CD8-positive, alpha-beta T cell (primary cell): ENCODE measurements at regions of chr7 and their contacts with region 1.

Region 1: GRCh38 chr7:83976295-83976694 is 218.3 kb downstream of the SEMA3A start:
- DNase-seq: peak in 3 of 9 experiments; percentile 7 to 49 (median 32)
- ATAC-seq: peak; percentile 70
- H3K4me3 ChIP-seq: no peak overlapping the region
- H3K4me3 Mint-ChIP-seq: no peak overlapping the region
- H3K27ac ChIP-seq: no peak overlapping the region
- H3K27ac Mint-ChIP-seq: no peak overlapping the region
- H3K4me1 ChIP-seq: no peaks in the 10 kb centered on the region
- H3K4me1 Mint-ChIP-seq: no peaks in the 10 kb centered on the region
- H3K27me3 ChIP-seq: no peaks in the 10 kb centered on the region
- H3K27me3 Mint-ChIP-seq: no peaks in the 10 kb centered on the region
- CTCF ChIP-seq: peak; percentile 73

Region 2: GRCh38 chr7:83996879-83997278 is 20.6 kb after region 1 on chr7:
- CTCF ChIA-PET with region 1: no interaction called
- POLR2A ChIA-PET with region 1: no interaction called
- intact Hi-C with region 1: no loop called
- DNase-seq: no peak
- ATAC-seq: no peak
- H3K4me3 ChIP-seq: no peak overlapping the region
- H3K4me3 Mint-ChIP-seq: no peak overlapping the region
- H3K27ac ChIP-seq: no peak overlapping the region
- H3K27ac Mint-ChIP-seq: no peak overlapping the region
- H3K4me1 ChIP-seq: no peaks in the 10 kb centered on the region
- H3K4me1 Mint-ChIP-seq: peaks cover 3% of the 10 kb centered on the region
- H3K27me3 ChIP-seq: no peaks in the 10 kb centered on the region
- H3K27me3 Mint-ChIP-seq: no peaks in the 10 kb centered on the region
- CTCF ChIP-seq: no peak

Region 3: DNA sequence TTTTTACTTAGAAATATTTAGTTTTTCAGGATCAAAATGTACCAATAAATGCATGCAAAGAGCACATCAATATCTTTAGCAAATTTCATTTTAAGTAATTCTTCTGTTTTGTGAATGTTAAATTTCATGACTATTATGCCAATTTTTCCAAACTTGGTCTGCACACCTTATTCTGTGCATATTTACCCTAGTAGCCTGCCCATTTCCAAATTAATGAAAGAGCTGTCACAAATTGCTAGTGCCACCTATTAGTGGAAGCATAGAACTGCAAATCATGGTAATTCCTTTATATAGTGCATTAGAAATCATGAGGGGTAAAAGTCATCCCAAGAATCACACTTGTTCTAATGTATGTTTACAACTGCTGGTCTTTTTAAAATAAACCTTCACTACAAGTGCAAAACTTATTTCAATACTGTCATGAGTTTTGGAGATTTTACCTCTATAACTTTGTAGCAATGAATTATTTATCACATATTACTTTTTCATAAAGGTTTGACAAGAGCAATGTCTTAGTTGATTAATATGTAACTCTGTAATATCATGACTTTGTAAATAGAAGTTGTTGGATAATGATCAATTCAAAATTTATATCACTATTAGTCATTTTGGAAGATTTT is 212.6 kb after region 1 on chr7:
- CTCF ChIA-PET with region 1: no interaction called
- POLR2A ChIA-PET with region 1: no interaction called
- intact Hi-C with region 1: loop called (anchors 1 to 5 kb)
- DNase-seq: no peak
- ATAC-seq: no peak
- H3K4me3 ChIP-seq: no peak overlapping the region
- H3K4me3 Mint-ChIP-seq: no peak overlapping the region
- H3K27ac ChIP-seq: no peak overlapping the region
- H3K27ac Mint-ChIP-seq: no peak overlapping the region
- H3K4me1 ChIP-seq: no peaks in the 10 kb centered on the region
- H3K4me1 Mint-ChIP-seq: peaks cover 22% of the 10 kb centered on the region
- H3K27me3 ChIP-seq: no peaks in the 10 kb centered on the region
- H3K27me3 Mint-ChIP-seq: no peaks in the 10 kb centered on the region
- CTCF ChIP-seq: no peak

Region 4: DNA sequence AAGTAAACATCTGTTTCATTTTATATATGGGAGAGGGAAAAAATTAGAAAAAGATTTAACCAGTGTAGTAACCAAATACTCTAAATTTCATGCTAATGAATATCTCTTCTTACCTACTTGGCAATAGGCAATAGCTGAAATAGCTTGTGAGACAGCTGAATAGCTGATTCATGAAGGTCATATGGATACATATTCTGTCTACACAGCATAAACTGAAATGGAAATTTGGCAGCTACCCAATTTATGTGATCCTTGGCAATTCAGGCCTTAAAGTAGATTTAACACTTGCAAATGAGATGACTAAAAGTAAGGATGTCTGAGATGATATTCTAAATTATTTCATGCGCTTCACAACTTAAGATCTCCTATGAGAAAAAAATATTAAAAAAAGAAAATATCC is 479.5 kb after region 1 on chr7:
- CTCF ChIA-PET with region 1: no interaction called
- POLR2A ChIA-PET with region 1: no interaction called
- intact Hi-C with region 1: loop called (anchors 2 to 5 kb)
- DNase-seq: no peak
- ATAC-seq: no peak
- H3K4me3 ChIP-seq: no peak overlapping the region
- H3K4me3 Mint-ChIP-seq: no peak overlapping the region
- H3K27ac ChIP-seq: no peak overlapping the region
- H3K27ac Mint-ChIP-seq: no peak overlapping the region
- H3K4me1 ChIP-seq: no peaks in the 10 kb centered on the region
- H3K4me1 Mint-ChIP-seq: no peaks in the 10 kb centered on the region
- H3K27me3 ChIP-seq: no peaks in the 10 kb centered on the region
- H3K27me3 Mint-ChIP-seq: no peaks in the 10 kb centered on the region
- CTCF ChIP-seq: no peak

Region 5: GRCh38 chr7:85023045-85023712 is 1046.9 kb after region 1 on chr7:
- CTCF ChIA-PET with region 1: interaction called, 3 read pairs
- POLR2A ChIA-PET with region 1: no interaction called
- intact Hi-C with region 1: loop called (anchors 1 kb)
- DNase-seq: peak in 3 of 9 experiments; percentile 31 to 48 (median 32)
- ATAC-seq: no peak
- H3K4me3 ChIP-seq: no peak overlapping the region
- H3K4me3 Mint-ChIP-seq: no peak overlapping the region
- H3K27ac ChIP-seq: no peak overlapping the region
- H3K27ac Mint-ChIP-seq: no peak overlapping the region
- H3K4me1 ChIP-seq: no peaks in the 10 kb centered on the region
- H3K4me1 Mint-ChIP-seq: no peaks in the 10 kb centered on the region
- H3K27me3 ChIP-seq: no peaks in the 10 kb centered on the region
- H3K27me3 Mint-ChIP-seq: peaks cover 3% of the 10 kb centered on the region
- CTCF ChIP-seq: peak; percentile 69

Region 6: DNA sequence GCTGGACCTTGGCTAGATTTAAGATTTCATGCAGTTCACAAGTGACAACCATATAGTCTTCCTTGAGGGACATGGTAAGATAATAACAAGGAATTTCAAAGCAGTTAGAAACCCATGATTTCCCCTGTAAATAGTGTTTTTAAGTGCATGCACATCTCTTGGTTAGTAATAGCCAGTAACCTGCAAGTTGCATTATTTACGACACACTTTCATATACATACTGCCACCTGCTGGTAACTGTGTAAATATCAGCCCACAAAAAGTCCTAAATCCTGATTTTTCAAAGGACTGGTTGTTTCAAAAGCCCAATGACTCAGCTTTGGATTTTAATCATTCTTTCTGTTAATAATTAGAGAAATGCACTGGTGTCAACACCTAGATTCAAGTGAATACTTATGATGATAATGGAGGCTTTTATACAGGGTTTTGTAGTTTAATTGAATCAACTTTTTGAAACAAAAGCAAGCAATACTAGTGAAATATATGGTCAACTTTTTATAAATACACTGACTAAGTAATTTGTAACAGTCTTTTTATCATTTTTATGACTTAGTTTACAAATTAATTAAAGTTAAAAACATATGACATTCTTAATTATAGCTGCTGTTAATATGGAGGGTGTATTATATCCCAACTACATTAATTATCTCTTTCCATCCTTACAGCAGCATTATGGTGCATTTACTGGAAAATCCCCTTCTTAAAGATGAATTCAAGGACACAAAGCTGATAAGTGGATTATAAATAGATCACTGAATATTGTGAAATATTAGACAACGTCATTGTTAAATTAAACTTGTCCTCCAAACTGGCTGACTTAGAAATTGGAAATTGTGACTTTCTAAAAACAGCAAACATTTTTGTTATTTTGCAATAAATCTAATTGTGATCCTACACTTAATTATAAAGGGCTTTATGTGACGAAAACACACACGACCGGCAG is 1578.2 kb after region 1 on chr7:
- CTCF ChIA-PET with region 1: no interaction called
- POLR2A ChIA-PET with region 1: no interaction called
- intact Hi-C with region 1: loop called (anchors 5 to 10 kb)
- DNase-seq: peak in 2 of 9 experiments; percentile 2 to 27
- ATAC-seq: no peak
- H3K4me3 ChIP-seq: no peak overlapping the region
- H3K4me3 Mint-ChIP-seq: no peak overlapping the region
- H3K27ac ChIP-seq: no peak overlapping the region
- H3K27ac Mint-ChIP-seq: no peak overlapping the region
- H3K4me1 ChIP-seq: no peaks in the 10 kb centered on the region
- H3K4me1 Mint-ChIP-seq: no peaks in the 10 kb centered on the region
- H3K27me3 ChIP-seq: no peaks in the 10 kb centered on the region
- H3K27me3 Mint-ChIP-seq: no peaks in the 10 kb centered on the region
- CTCF ChIP-seq: peak; percentile 42